ENCODE measurements at regions of chr1 and their contacts with region 1.

Region 1: DNA sequence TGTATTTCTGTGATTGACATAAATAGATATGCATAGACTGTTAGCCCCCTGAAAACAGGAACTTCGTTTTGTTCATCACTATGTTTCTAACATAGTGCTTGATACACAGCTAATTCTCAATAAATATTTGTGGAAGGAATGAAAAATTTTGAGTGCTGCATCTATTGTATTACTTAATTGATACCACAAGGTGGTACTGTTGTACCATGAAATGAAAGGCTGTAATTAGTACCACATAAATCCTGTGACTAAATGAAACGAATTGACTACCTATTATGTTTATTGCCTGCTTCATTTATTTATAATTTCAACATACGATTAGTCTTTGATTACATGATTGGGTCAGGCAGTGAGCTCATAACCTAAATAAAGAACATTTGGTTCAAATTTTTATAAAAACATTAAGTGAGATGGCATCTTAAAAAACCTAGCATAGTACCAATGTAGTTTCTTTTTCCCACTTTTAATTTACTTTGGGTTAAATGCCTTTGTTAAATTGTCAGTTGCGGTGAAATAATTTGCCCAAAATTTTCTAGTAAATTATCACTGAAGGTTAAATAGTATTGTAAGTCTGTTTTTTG is 15.0 kb upstream of the TGFB2 start:
- DNase-seq: no peak
- H3K4me3 ChIP-seq: peak overlapping the region in 7 of 59 donors; percentile 15 to 45 (median 22)
- H3K27ac ChIP-seq: no peak overlapping the region
- H3K27me3 ChIP-seq: no peaks in the 10 kb centered on the region
- CTCF ChIP-seq: peak; percentile 58 to 94 (median 80)

Region 2: GRCh38 chr1:218568962-218569550 is 238.9 kb after region 1 on chr1:
- intact Hi-C with region 1: no loop called
- DNase-seq: no peak
- H3K4me3 ChIP-seq: no peak overlapping the region
- H3K27ac ChIP-seq: no peak overlapping the region
- H3K27me3 ChIP-seq: no peaks in the 10 kb centered on the region
- CTCF ChIP-seq: no peak

Region 3: GRCh38 chr1:219566951-219567947 is 1237.1 kb after region 1 on chr1:
- intact Hi-C with region 1: loop called in 1 of 2 experiments (anchors 10 kb)
- DNase-seq: no peak
- H3K4me3 ChIP-seq: no peak overlapping the region
- H3K27ac ChIP-seq: no peak overlapping the region
- H3K27me3 ChIP-seq: peaks cover 0 to 3% (median 0%) of the 10 kb centered on the region in 45 donors
- CTCF ChIP-seq: peak; percentile 14 to 77 (median 61)

Measured in dorsolateral prefrontal cortex (tissue), 120 donors.